CD14-positive monocyte (primary cell): ENCODE measurements at regions of chr5 and their contacts with region 1.

Region 1: GRCh38 chr5:91311697-91312501 is 71.2 kb downstream of the ARRDC3 start:
- DNase-seq: peak; percentile 93 to 97 (median 97)
- H3K4me3 ChIP-seq: peak overlapping the region; percentile 16 to 70 (median 29)
- H3K4me3 Mint-ChIP-seq: peak overlapping the region; percentile 60 to 87
- H3K27ac ChIP-seq: peak overlapping the region; percentile 97 to 99
- H3K27ac Mint-ChIP-seq: peak overlapping the region; percentile 97 to 100 (median 99)
- H3K4me1 ChIP-seq: peaks cover 82 to 86% of the 10 kb centered on the region in 2 donors
- H3K4me1 Mint-ChIP-seq: peaks cover 78% of the 10 kb centered on the region
- H3K27me3 ChIP-seq: no peaks in the 10 kb centered on the region
- H3K27me3 Mint-ChIP-seq: no peaks in the 10 kb centered on the region
- CTCF ChIP-seq: no peak

Region 2: GRCh38 chr5:91383027-91383955 is 71.4 kb after region 1 on chr5 and contains the start of gene ARRDC3:
- intact Hi-C with region 1: loop called (anchors 2 to 5 kb)
- DNase-seq: peak; percentile 92 to 96 (median 93)
- H3K4me3 ChIP-seq: peak within 1 kb of the TSS; percentile 88 to 100 (median 98)
- H3K4me3 Mint-ChIP-seq: peak within 1 kb of the TSS; percentile 97 to 98
- H3K27ac ChIP-seq: peak within 1 kb of the TSS; percentile 99 to 100
- H3K27ac Mint-ChIP-seq: peak within 1 kb of the TSS; percentile 88 to 99 (median 97)
- H3K4me1 ChIP-seq: peaks cover 20 to 25% of the 10 kb centered on the region in 2 donors
- H3K4me1 Mint-ChIP-seq: peaks cover 15% of the 10 kb centered on the region
- H3K27me3 ChIP-seq: no peaks in the 10 kb centered on the region
- H3K27me3 Mint-ChIP-seq: no peaks in the 10 kb centered on the region
- CTCF ChIP-seq: no peak
- polyA plus RNA-seq, gene ARRDC3: 43.3 to 68.0 (median 64.6) TPM